Ascending aorta (tissue), 2 donors: ENCODE measurements at regions of chr11 and their contacts with region 1.

Region 1: DNA sequence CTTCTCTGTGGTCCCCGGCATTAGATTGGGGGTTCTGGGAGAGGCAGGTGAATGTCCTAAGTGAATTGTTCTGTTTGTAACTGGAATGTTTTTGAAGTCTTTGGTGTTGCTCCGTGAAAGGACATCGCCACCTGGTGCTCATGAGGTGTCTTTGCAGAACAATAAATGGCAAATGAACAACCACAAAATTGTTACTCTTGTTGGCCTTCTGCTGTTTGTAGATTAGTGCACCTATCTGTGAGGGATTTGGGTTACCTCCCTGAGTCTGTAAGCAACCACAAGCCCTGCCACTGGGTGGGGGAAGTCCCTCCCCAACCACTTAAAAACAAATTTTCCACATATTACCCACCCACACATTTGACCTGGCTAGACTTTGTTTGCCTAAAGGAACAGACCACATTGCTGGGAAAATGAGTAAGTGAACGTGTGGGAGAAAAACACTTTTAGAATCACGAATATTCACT is 4.7 kb downstream of the MPEG1 start:
- DNase-seq: no peak
- H3K4me3 ChIP-seq: peak overlapping the region in 1 of 2 donors; percentile 13
- H3K27ac ChIP-seq: no peak overlapping the region
- H3K4me1 ChIP-seq: peaks cover 2 to 6% of the 10 kb centered on the region in 2 donors
- H3K27me3 ChIP-seq: no peaks in the 10 kb centered on the region
- CTCF ChIP-seq: peak; percentile 69 to 78 (median 76)

Region 2: GRCh38 chr11:58912124-58912523 is 295.9 kb before region 1 on chr11:
- intact Hi-C with region 1: no loop called
- DNase-seq: no peak
- H3K4me3 ChIP-seq: no peak overlapping the region
- H3K27ac ChIP-seq: no peak overlapping the region
- H3K4me1 ChIP-seq: no peaks in the 10 kb centered on the region
- H3K27me3 ChIP-seq: no peaks in the 10 kb centered on the region
- CTCF ChIP-seq: no peak

Region 3: DNA sequence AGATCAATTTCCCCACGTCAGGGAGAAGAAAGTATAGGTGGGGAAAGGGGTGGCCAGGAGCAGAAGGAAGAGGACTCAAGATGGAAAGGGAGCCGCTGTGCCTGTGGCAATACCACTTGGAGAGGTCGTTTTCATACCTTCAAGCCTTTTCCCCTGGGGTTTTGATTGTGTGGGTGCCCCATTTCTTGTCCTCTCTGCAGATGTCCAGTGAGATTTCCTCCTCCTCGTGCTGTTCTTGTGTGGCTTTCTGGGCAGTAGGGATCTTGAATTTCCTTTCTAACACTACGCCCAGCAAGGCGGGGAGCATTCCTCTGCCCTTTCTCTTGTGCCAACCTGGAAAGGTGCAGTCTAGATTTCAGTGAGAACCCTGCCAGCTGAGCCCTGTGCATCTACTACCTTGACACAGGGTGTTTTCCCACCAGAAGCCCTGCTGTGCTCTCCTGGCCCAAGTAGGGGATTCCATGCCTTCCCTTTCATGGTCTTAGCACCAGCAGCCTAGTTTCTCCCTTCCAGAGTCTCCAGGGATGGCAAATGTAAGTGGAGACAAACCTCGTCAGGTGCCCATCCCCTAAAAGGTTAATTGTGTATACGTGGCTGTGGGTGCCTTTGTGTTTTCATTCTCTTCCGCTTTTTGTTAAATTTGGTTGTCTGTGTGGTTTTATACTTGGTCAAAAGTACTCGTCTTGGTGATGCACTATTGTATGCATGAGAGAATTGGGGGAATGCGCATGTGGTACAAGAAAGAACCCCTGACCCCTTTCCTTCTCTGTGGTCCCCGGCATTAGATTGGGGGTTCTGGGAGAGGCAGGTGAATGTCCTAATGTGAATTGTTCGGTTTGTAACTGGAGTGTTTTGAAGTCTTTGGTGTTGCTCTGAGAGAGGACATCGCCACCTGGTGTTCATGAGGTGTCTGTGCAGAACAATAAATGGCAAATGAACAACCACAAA is 76.1 kb after region 1 on chr11:
- intact Hi-C with region 1: loop called (anchors 2 kb)
- DNase-seq: no peak
- H3K4me3 ChIP-seq: no peak overlapping the region
- H3K27ac ChIP-seq: no peak overlapping the region
- H3K4me1 ChIP-seq: no peaks in the 10 kb centered on the region
- H3K27me3 ChIP-seq: no peaks in the 10 kb centered on the region
- CTCF ChIP-seq: peak; percentile 59 to 74 (median 73)

Region 4: DNA sequence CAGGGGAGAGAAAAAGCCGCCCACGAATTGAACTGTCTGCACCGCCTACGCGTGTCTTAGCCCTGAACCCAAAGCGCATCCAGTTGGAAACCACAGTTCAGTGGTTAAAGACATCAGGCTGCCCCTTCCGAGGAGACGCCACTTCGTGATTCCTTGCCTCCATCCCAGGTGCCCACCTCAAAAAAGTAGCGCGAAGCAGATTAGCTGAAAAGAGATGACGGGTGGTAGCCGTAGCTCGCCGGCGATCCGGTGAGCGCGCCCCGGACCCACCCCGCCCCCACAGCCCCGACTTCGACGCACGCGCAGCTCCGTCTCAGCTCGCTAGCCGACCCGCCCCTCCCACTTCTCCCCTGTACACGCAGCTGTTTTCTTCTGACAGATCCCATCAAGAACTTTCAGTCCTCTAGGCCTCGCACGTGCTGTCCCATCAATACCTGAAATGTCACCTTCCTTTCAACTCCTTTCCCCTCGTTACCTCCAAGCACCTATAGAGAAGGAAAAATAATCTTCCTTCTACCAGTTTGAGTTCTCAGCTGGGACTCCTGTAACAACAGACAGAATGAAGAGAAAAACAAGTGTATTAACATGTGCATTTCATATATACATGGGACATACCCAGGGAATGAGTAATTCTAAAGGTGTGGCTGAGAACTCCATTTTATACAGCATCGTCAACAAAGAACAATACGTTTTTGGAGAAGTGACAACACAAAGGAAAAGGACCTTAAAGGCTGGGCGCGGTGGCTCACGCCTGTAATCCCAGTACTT is 352.9 kb after region 1 on chr11:
- intact Hi-C with region 1: no loop called
- DNase-seq: peak; percentile 38 to 91
- H3K4me3 ChIP-seq: peak overlapping the region; percentile 83
- H3K27ac ChIP-seq: peak overlapping the region; percentile 74 to 89
- H3K4me1 ChIP-seq: peaks cover 0 to 8% of the 10 kb centered on the region in 2 donors
- H3K27me3 ChIP-seq: no peaks in the 10 kb centered on the region
- CTCF ChIP-seq: no peak